ENCODE measurements at regions of chr13 and their contacts with region 1.

Region 1: GRCh38 chr13:77480066-77480465 is 55.4 kb upstream of the SCEL start:
- DNase-seq: no peak
- H3K4me3 Mint-ChIP-seq: no peak overlapping the region
- H3K27ac Mint-ChIP-seq: no peak overlapping the region
- H3K4me1 Mint-ChIP-seq: peaks cover 18% of the 10 kb centered on the region
- H3K27me3 Mint-ChIP-seq: no peaks in the 10 kb centered on the region

Region 2: GRCh38 chr13:77136902-77137420 is 343.1 kb before region 1 on chr13:
- CTCF ChIA-PET with region 1: interaction called, 6 read pairs
- POLR2A ChIA-PET with region 1: no interaction called
- intact Hi-C with region 1: loop called (anchors 10 kb)
- DNase-seq: no peak
- H3K4me3 Mint-ChIP-seq: no peak overlapping the region
- H3K27ac Mint-ChIP-seq: no peak overlapping the region
- H3K4me1 Mint-ChIP-seq: no peaks in the 10 kb centered on the region
- H3K27me3 Mint-ChIP-seq: no peaks in the 10 kb centered on the region

Region 3: GRCh38 chr13:77285098-77285497 is 195.0 kb before region 1 on chr13:
- CTCF ChIA-PET with region 1: interaction called, 13 read pairs
- POLR2A ChIA-PET with region 1: no interaction called
- intact Hi-C with region 1: loop called (anchors 2 kb)
- DNase-seq: no peak
- H3K4me3 Mint-ChIP-seq: no peak overlapping the region
- H3K27ac Mint-ChIP-seq: no peak overlapping the region
- H3K4me1 Mint-ChIP-seq: peaks cover 39% of the 10 kb centered on the region
- H3K27me3 Mint-ChIP-seq: no peaks in the 10 kb centered on the region

Region 4: GRCh38 chr13:77329133-77329910 is 150.7 kb before region 1 on chr13:
- CTCF ChIA-PET with region 1: interaction called, 65 read pairs
- POLR2A ChIA-PET with region 1: interaction called, 34 read pairs
- intact Hi-C with region 1: loop called (anchors 1 kb)
- DNase-seq: peak; percentile 96
- H3K4me3 Mint-ChIP-seq: peak overlapping the region; percentile 98
- H3K27ac Mint-ChIP-seq: peak overlapping the region; percentile 96
- H3K4me1 Mint-ChIP-seq: peaks cover 35% of the 10 kb centered on the region
- H3K27me3 Mint-ChIP-seq: no peaks in the 10 kb centered on the region

Region 5: GRCh38 chr13:77429320-77430142 is 50.5 kb before region 1 on chr13:
- CTCF ChIA-PET with region 1: interaction called, 6 read pairs
- POLR2A ChIA-PET with region 1: interaction called, 7 read pairs
- intact Hi-C with region 1: loop called (anchors 1 kb)
- DNase-seq: peak; percentile 80
- H3K4me3 Mint-ChIP-seq: peak overlapping the region; percentile 7
- H3K27ac Mint-ChIP-seq: peak overlapping the region; percentile 77
- H3K4me1 Mint-ChIP-seq: peaks cover 17% of the 10 kb centered on the region
- H3K27me3 Mint-ChIP-seq: no peaks in the 10 kb centered on the region

Region 6: DNA sequence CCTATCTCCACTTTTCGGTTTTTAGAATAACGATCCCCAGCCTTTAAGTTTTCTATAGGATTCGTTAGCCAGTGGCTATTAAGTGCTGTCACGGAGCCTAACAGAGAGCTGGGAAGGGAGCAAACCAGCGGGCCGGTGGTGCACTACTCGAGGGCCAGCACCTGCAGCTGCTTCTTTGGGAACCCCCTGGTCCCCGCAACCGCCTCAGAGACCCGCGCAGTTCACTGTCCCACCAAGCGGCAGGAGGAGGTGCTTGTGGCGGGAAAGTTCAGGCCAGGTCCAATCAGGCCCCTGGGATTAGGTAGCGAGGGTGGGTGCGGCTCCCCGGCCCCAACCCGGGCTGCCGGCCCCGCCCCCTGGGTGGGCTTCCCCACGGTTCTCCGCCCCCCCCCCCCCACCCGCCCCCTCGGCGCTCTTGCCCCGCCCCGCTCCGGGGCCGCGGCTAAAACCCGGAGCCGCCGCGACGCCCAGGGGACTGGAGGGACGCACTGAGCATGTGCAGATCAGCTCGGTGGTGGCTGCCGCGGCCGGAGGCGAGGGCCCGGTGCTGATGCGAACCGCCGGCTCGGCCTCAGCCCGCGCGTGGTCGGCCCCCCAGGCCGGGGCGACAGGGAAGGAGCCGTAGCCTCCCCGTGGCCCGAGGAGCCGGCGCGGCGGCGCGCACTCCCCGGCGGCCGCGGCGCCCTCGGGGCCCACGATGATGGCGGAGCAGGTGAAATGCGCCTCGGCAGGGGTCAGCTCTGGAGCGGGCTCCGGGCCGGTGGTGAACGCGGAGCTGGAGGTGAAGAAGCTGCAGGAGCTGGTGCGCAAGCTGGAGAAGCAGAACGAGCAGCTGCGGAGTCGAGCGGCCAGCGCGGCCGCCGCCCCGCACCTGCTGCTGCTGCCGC is 217.4 kb after region 1 on chr13 and contains the start of gene SLAIN1:
- CTCF ChIA-PET with region 1: interaction called, 4 read pairs
- POLR2A ChIA-PET with region 1: interaction called, 3 read pairs
- intact Hi-C with region 1: loop called (anchors 5 kb)
- DNase-seq: peak; percentile 85
- H3K4me3 Mint-ChIP-seq: peak within 1 kb of the TSS; percentile 92
- H3K27ac Mint-ChIP-seq: peak within 1 kb of the TSS; percentile 49
- H3K4me1 Mint-ChIP-seq: peaks cover 32% of the 10 kb centered on the region
- H3K27me3 Mint-ChIP-seq: no peaks in the 10 kb centered on the region
- total RNA-seq, gene SLAIN1: 21.8 to 25.8 TPM